ENCODE measurements at regions of chr11 and their contacts with region 1.

Region 1: DNA sequence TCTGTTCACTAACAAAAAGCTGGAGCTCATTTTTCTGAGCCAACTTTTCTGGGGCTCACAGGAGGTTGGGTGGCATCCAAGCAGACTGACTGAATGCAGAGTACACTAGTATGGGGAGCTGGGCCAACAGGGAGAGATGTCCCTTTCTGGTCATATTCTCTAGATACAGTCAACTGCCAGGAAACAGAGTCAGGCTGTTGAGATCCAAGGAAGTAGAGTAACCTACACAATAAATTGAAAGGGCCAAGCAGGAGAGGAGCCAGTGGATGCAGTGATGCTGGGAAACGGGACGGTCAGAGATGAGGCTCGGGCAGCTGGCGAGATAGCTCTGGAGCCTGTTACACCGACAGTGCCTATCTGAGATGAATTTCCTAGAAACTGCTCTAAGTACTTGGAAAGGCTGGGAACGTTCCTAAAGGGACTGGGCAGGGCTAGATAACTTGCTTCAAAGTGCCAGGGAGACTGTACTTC is 71.1 kb downstream of the LARGE2 start:
- DNase-seq: peak; percentile 23 to 37
- ATAC-seq: peak; percentile 62 to 89 (median 84)
- H3K4me3 ChIP-seq: no peak overlapping the region
- H3K27ac ChIP-seq: peak overlapping the region in 5 of 10 donors; percentile 15 to 63 (median 45)
- H3K4me1 ChIP-seq: peaks cover 8 to 59% (median 33%) of the 10 kb centered on the region in 9 donors
- H3K27me3 ChIP-seq: no peaks in the 10 kb centered on the region
- CTCF ChIP-seq: no peak

Region 2: DNA sequence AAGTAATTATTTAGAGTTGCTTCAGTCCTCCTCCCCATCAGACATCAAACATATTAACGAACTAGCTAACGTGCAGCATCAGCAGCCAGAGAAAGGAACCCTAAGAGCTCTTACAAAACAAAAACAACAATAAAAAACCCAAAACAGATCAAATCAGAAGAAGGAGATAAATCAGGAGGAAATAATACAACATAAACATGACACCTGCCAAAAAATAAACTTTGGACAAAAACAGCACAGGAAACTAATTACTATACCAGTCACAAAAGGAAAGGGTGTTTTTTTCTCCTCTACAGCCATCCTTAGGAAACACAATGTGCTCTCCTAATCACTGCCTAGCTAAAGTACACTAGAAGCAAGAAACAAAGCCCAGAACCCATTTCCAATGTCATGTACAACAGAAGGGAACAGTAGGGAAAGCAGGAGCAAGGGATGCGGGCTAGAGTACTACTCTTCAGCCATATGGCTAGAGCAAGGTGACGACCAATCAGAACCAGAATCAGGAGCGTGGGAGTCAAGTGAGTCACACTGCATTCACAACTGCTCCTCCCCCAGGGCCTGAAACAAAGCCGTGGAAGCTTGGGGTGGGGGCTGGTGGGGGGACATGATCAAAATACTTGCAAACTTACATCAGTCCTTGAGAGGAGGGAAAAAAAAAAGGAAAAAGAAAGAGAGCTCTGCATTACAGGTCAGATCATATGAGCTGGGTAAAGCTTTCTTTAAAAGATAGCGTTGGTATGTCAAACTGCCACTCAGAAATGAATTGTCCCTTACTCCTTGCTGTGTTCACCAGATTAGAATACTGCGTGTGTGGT is 10.7 kb before region 1 on chr11:
- intact Hi-C with region 1: loop called in 1 of 10 experiments (anchors 1 kb)
- DNase-seq: peak in 1 of 2 donors; percentile 63
- ATAC-seq: peak; percentile 45 to 92 (median 84)
- H3K4me3 ChIP-seq: peak overlapping the region in 1 of 10 donors; percentile 16
- H3K27ac ChIP-seq: peak overlapping the region in 4 of 10 donors; percentile 53 to 61 (median 55)
- H3K4me1 ChIP-seq: peaks cover 9 to 64% (median 34%) of the 10 kb centered on the region in 9 donors
- H3K27me3 ChIP-seq: no peaks in the 10 kb centered on the region
- CTCF ChIP-seq: no peak

Region 3: DNA sequence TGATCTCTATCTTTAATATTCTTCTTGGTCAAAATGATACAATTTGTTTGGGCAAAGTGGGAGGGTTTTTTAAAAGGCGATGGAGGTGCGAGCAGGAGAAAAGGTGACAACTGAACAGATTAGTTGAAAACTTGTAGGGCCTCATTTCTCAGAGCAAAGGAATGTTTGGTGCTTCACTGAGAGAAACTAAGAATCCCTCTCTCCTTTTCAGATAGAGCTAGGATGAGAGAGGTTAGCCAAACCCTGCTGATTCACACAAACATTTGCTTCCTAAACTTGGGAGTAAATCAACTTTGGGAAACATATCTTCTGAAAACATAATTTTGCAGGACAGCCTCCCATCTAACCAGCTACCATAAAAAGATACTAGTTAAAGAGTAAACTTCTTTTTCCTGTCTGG is 70.7 kb after region 1 on chr11:
- intact Hi-C with region 1: no loop called
- DNase-seq: no peak
- ATAC-seq: no peak
- H3K4me3 ChIP-seq: no peak overlapping the region
- H3K27ac ChIP-seq: no peak overlapping the region
- H3K4me1 ChIP-seq: peaks cover 0 to 12% (median 0%) of the 10 kb centered on the region in 9 donors
- H3K27me3 ChIP-seq: no peaks in the 10 kb centered on the region
- CTCF ChIP-seq: no peak

Measured in heart right ventricle (tissue), 16 donors.